Gastrocnemius medialis (tissue), 4 donors: ENCODE measurements at regions of chr2 and their contacts with region 1.

Region 1: GRCh38 chr2:171999604-172000469 is at the start of gene METAP1D:
- DNase-seq: peak; percentile 80 to 88
- ATAC-seq: peak; percentile 92 to 94
- H3K4me3 ChIP-seq: peak within 1 kb of the TSS; percentile 64 to 83 (median 74)
- H3K27ac ChIP-seq: peak within 1 kb of the TSS; percentile 75 to 85 (median 79)
- H3K4me1 ChIP-seq: peaks cover 11 to 15% of the 10 kb centered on the region in 2 donors
- H3K27me3 ChIP-seq: no peaks in the 10 kb centered on the region
- CTCF ChIP-seq: no peak
- POLR2A ChIP-seq: peak; percentile 59 to 64
- total RNA-seq, gene METAP1D: 4.3 to 14.3 (median 9.7) TPM

Region 2: GRCh38 chr2:171811245-171811628 is 188.6 kb before region 1 on chr2:
- in situ Hi-C with region 1: no loop called
- intact Hi-C with region 1: loop called (anchors 2 kb)
- DNase-seq: no peak
- ATAC-seq: peak; percentile 53 to 56
- H3K4me3 ChIP-seq: no peak overlapping the region
- H3K27ac ChIP-seq: peak overlapping the region in 2 of 4 donors; percentile 1 to 31
- H3K4me1 ChIP-seq: peaks cover 0 to 35% of the 10 kb centered on the region in 2 donors
- H3K27me3 ChIP-seq: no peaks in the 10 kb centered on the region
- CTCF ChIP-seq: peak in 4 of 5 experiments; percentile 21 to 40 (median 28)
- POLR2A ChIP-seq: no peak

Region 3: GRCh38 chr2:171922230-171923022 is 77.4 kb before region 1 on chr2 and contains the start of gene HAT1:
- in situ Hi-C with region 1: no loop called
- intact Hi-C with region 1: no loop called
- DNase-seq: peak; percentile 96
- ATAC-seq: peak; percentile 97 to 98
- H3K4me3 ChIP-seq: peak within 1 kb of the TSS; percentile 84 to 94 (median 86)
- H3K27ac ChIP-seq: peak within 1 kb of the TSS; percentile 92 to 94 (median 93)
- H3K4me1 ChIP-seq: peaks cover 23 to 24% of the 10 kb centered on the region in 2 donors
- H3K27me3 ChIP-seq: no peaks in the 10 kb centered on the region
- CTCF ChIP-seq: no peak
- POLR2A ChIP-seq: peak; percentile 61 to 78
- total RNA-seq, gene HAT1: 30.6 to 61.9 (median 50.0) TPM

Region 4: DNA sequence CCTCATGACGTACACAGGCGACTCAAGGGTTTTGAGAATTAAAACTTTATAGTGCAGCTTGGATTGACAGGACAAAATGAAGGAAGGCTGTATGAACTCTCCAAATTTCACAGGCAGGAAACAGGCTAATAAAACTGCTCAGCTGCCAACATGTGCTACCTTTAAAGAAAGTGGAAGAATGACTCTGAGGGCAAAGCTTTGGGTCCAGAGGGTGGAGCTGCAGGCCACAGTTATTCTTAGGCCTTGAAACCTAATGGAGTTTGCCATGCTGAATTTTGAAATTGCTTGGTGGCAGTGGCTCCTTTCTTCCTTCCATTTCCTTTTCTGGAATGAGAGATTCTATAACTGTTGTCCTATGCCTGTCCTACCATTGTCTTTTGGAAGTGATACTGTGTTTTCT is 42.8 kb before region 1 on chr2:
- in situ Hi-C with region 1: no loop called
- intact Hi-C with region 1: loop called (anchors 2 kb)
- DNase-seq: no peak
- ATAC-seq: no peak
- H3K4me3 ChIP-seq: no peak overlapping the region
- H3K27ac ChIP-seq: peak overlapping the region in 2 of 4 donors; percentile 12 to 44
- H3K4me1 ChIP-seq: peaks cover 47 to 62% of the 10 kb centered on the region in 2 donors
- H3K27me3 ChIP-seq: no peaks in the 10 kb centered on the region
- CTCF ChIP-seq: no peak
- POLR2A ChIP-seq: no peak

Region 5: GRCh38 chr2:172095146-172095904 is 95.5 kb after region 1 on chr2:
- in situ Hi-C with region 1: no loop called
- intact Hi-C with region 1: loop called (anchors 5 kb)
- DNase-seq: no peak
- ATAC-seq: no peak
- H3K4me3 ChIP-seq: peak overlapping the region; percentile 45 to 71 (median 48)
- H3K27ac ChIP-seq: no peak overlapping the region
- H3K4me1 ChIP-seq: peaks cover 23 to 49% of the 10 kb centered on the region in 2 donors
- H3K27me3 ChIP-seq: peaks cover 97 to 100% (median 100%) of the 10 kb centered on the region in 3 donors
- CTCF ChIP-seq: no peak
- POLR2A ChIP-seq: no peak